ENCODE measurements at regions of chr10 and their contacts with region 1.

Region 1: GRCh38 chr10:122565728-122566206 is 5.2 kb downstream of the DMBT1 start:
- DNase-seq: peak; percentile 85 to 93
- ATAC-seq: peak; percentile 69
- H3K4me3 ChIP-seq: no peak overlapping the region
- H3K27ac ChIP-seq: no peak overlapping the region
- H3K4me1 ChIP-seq: no peaks in the 10 kb centered on the region
- H3K27me3 ChIP-seq: no peaks in the 10 kb centered on the region

Region 2: GRCh38 chr10:122279725-122280141 is 286.0 kb before region 1 on chr10:
- intact Hi-C with region 1: loop called in 1 of 2 experiments (anchors 5 kb)
- DNase-seq: no peak
- ATAC-seq: no peak
- H3K4me3 ChIP-seq: no peak overlapping the region
- H3K27ac ChIP-seq: no peak overlapping the region
- H3K4me1 ChIP-seq: no peaks in the 10 kb centered on the region
- H3K27me3 ChIP-seq: no peaks in the 10 kb centered on the region

Region 3: GRCh38 chr10:122298598-122299301 is 267.0 kb before region 1 on chr10:
- intact Hi-C with region 1: loop called (anchors 5 kb)
- DNase-seq: peak; percentile 80 to 90
- ATAC-seq: peak; percentile 89
- H3K4me3 ChIP-seq: no peak overlapping the region
- H3K27ac ChIP-seq: no peak overlapping the region
- H3K4me1 ChIP-seq: no peaks in the 10 kb centered on the region
- H3K27me3 ChIP-seq: no peaks in the 10 kb centered on the region

Region 4: DNA sequence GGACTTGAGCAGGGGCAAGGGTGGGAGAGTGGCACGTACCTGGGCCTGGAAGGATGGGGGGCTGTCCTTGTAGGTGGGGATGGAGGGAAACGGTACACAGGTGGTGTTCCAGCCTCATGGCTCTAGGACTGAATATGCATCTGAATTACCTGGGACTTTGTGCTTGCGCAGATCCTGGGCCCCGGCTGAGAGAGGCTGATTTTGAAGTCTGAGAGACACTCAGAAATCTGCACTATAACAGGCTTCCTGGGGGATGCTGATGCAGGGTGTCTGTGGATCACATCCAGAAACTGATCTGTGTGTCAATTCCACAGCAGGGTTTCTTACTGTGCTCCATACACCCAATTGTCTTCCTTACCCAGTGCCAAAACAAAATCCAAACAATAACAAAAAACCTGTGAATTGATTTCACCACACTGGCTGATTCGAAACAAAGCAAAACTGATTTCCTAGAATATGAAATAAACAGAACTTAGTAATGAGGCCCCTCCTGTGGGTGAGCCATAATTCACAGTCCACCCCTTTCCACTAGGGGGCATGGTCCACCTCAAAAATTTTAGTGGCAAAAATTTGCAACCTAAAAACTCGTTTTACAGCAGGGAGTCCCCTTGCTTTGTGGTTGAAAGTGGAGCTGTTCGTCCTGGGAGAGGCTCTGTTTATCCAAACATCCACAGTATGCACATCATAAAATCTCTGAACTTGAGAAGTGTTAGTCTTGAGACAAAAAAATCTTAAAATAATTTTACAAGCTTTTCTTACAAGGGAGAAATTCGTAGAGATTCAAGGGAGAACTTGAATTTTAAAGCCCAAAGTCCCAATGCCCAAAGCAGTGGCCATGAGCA is 223.3 kb before region 1 on chr10:
- intact Hi-C with region 1: loop called (anchors 1 to 5 kb)
- DNase-seq: no peak
- ATAC-seq: peak; percentile 48
- H3K4me3 ChIP-seq: no peak overlapping the region
- H3K27ac ChIP-seq: no peak overlapping the region
- H3K4me1 ChIP-seq: no peaks in the 10 kb centered on the region
- H3K27me3 ChIP-seq: no peaks in the 10 kb centered on the region

Region 5: GRCh38 chr10:122435212-122435827 is 130.4 kb before region 1 on chr10:
- intact Hi-C with region 1: loop called in 1 of 2 experiments (anchors 5 kb)
- DNase-seq: no peak
- ATAC-seq: no peak
- H3K4me3 ChIP-seq: no peak overlapping the region
- H3K27ac ChIP-seq: no peak overlapping the region
- H3K4me1 ChIP-seq: no peaks in the 10 kb centered on the region
- H3K27me3 ChIP-seq: no peaks in the 10 kb centered on the region

Region 6: GRCh38 chr10:122446668-122447423 is 118.9 kb before region 1 on chr10:
- intact Hi-C with region 1: loop called in 1 of 2 experiments (anchors 5 kb)
- DNase-seq: no peak
- ATAC-seq: no peak
- H3K4me3 ChIP-seq: no peak overlapping the region
- H3K27ac ChIP-seq: no peak overlapping the region
- H3K4me1 ChIP-seq: peaks cover 0 to 2% of the 10 kb centered on the region in 2 donors
- H3K27me3 ChIP-seq: no peaks in the 10 kb centered on the region

Region 7: GRCh38 chr10:122703439-122704118 is 137.8 kb after region 1 on chr10:
- intact Hi-C with region 1: loop called in 1 of 2 experiments (anchors 5 kb)
- DNase-seq: peak; percentile 73 to 86
- ATAC-seq: peak; percentile 77
- H3K4me3 ChIP-seq: no peak overlapping the region
- H3K27ac ChIP-seq: no peak overlapping the region
- H3K4me1 ChIP-seq: no peaks in the 10 kb centered on the region
- H3K27me3 ChIP-seq: no peaks in the 10 kb centered on the region

Measured in aorta (tissue), 5 donors.